ENCODE measurements at regions of chr16 and their contacts with region 1.

Region 1: DNA sequence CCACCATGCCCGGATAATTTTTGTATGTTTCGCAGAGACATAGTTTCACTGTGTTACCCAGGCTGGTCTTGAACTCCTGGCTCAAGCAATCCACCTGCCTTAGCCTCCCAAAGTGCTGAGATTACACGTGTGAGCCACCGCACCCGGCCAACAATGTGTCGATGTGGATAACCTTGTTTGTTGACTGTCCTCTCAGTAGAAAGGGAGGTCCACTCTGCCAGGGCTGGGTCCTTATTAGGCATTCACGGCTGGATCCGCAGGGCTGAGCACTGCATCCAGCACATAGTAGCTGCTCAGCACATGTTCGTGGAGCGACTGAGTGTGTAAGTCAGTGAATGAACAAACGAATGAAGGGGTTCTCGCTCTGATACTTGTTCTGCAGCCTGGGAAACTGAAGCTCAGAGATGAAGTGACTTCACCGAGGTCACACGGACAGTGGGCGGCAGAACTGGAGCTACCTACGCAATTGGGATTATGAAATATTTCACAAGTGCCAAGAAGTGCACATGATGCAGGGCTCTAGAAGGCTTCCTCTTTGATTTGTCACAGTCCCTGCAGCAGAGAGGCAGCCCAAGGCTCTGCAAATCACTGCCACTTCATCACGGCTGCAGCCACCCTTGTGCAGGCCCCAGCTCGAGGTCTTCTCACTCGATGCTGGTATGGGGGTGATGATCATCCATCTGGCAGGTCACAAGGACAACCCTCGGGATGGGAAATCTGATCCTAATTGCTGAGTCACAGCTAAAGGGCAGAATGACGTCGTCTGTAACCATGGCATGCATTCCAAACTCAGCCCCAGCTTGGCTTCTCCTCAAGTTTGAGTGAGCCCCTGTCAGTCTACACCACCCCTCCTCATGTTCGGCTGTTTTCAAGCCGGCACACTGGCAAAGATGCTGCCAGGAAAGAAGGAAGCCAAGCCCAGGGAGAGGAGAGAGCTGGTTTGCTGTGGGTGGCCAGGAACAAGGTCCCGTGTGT is 28.0 kb upstream of the SNN start:
- DNase-seq: peak; percentile 73 to 82
- H3K4me3 ChIP-seq: no peak overlapping the region
- H3K27ac ChIP-seq: peak overlapping the region; percentile 43 to 91 (median 85)
- H3K4me1 ChIP-seq: peaks cover 20 to 46% (median 33%) of the 10 kb centered on the region in 4 donors
- H3K27me3 ChIP-seq: no peaks in the 10 kb centered on the region
- CTCF ChIP-seq: no peak
- EP300 ChIP-seq: peak; percentile 84
- POLR2A ChIP-seq: no peak

Region 2: GRCh38 chr16:11407047-11407982 is 232.9 kb before region 1 on chr16:
- intact Hi-C with region 1: loop called (anchors 5 kb)
- DNase-seq: peak; percentile 83 to 84
- H3K4me3 ChIP-seq: no peak overlapping the region
- H3K27ac ChIP-seq: no peak overlapping the region
- H3K4me1 ChIP-seq: peaks cover 0 to 3% (median 0%) of the 10 kb centered on the region in 4 donors
- H3K27me3 ChIP-seq: no peaks in the 10 kb centered on the region
- CTCF ChIP-seq: peak in 5 of 7 experiments; percentile 48 to 91 (median 70)
- EP300 ChIP-seq: no peak
- POLR2A ChIP-seq: no peak